ENCODE measurements at regions of chr14 and their contacts with region 1.

Region 1: DNA sequence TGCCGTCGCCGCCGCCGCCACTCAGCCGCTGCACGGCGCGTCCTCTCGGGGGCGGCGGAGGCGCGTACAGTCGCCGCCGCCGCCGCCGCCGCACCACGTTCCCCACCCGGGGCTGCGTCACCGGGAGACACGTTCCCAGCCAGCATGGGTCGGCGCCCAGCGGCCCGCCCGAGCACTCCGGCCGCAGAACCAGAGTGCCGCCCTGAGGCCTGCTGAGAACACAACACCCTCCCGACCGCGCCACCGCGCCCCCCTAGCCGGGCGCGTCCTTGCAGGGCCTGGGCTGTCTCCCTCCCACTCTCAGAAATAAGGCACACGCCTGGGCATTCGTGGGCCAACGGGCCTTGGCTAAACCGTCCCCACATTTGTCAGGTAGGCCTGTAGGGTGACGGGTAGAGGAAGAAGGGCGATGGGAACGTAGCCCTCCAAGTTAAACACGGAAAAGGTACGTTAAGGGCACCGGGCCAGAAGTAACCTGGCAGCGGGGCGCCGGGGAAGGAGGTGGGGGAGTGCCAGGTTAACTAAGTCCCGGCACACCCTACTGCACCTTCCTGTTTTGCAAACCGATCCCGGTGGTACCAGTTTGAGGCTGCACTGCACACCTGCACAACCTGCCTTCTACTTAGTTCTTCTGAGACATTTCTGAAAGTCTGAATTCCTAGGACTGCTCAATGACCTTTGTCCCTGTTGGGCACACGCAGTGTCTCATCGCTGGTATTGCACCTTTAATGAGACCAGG is at the start of gene MAP4K5:
- DNase-seq: peak; percentile 91
- H3K4me3 Mint-ChIP-seq: peak within 1 kb of the TSS; percentile 85
- H3K27ac Mint-ChIP-seq: peak within 1 kb of the TSS; percentile 58
- H3K4me1 Mint-ChIP-seq: peaks cover 42% of the 10 kb centered on the region
- H3K27me3 Mint-ChIP-seq: no peaks in the 10 kb centered on the region
- total RNA-seq, gene MAP4K5: 14.6 to 15.6 TPM

Region 2: GRCh38 chr14:49852301-49853157 is 680.1 kb before region 1 on chr14 and contains the start of gene NEMF:
- CTCF ChIA-PET with region 1: no interaction called
- POLR2A ChIA-PET with region 1: no interaction called
- intact Hi-C with region 1: loop called (anchors 2 kb)
- DNase-seq: peak; percentile 88
- H3K4me3 Mint-ChIP-seq: peak within 1 kb of the TSS; percentile 98
- H3K27ac Mint-ChIP-seq: peak within 1 kb of the TSS; percentile 95
- H3K4me1 Mint-ChIP-seq: peaks cover 39% of the 10 kb centered on the region
- H3K27me3 Mint-ChIP-seq: no peaks in the 10 kb centered on the region
- total RNA-seq, gene NEMF: 63.6 to 71.0 TPM

Region 3: DNA sequence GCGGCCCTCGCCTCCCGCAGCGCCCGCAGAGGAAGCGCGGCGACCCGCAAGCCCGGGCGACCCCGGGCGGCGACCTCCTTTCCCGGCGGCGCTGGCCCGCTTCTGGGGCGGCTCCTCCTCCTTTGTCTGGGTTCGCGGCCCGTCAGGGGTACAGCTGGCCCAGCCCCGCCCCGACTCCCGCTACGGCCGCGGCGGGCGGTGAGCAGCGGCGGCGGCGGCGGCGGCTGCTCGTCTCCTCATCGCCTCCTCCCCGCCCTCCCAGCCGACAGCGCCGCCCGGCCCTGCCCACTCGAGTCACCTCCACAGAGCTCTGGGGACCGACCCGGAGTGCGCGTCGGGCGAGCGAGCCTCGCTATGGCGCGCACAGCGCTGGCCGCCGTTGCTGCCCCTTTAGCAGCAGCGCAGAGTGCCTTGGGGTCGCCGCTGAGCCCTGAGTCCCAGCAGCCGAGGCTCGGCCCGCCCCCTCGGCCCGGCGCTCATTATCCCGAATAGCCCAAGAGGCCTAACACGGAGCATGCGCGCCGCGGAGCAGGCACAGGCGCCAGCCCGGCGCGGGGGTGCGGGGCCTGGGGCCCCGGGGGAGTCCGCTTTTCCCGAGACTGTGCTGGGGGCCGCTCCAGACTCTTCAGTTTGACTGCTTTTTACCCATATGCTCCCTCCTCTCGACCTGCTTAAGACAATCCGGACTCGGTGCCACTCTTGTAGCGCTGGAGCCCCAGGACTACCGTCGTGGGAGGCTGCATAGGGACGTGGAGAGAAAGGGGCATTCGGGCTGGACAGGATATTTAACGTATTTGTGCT is 301.0 kb before region 1 on chr14 and contains the start of gene SOS2:
- CTCF ChIA-PET with region 1: no interaction called
- POLR2A ChIA-PET with region 1: no interaction called
- intact Hi-C with region 1: loop called (anchors 1 kb)
- DNase-seq: peak; percentile 86
- H3K4me3 Mint-ChIP-seq: peak within 1 kb of the TSS; percentile 78
- H3K27ac Mint-ChIP-seq: peak within 1 kb of the TSS; percentile 85
- H3K4me1 Mint-ChIP-seq: peaks cover 40% of the 10 kb centered on the region
- H3K27me3 Mint-ChIP-seq: no peaks in the 10 kb centered on the region
- total RNA-seq, gene SOS2: 19.6 to 20.9 TPM

Region 4: GRCh38 chr14:50363714-50364111 is 169.0 kb before region 1 on chr14:
- CTCF ChIA-PET with region 1: no interaction called
- POLR2A ChIA-PET with region 1: no interaction called
- intact Hi-C with region 1: loop called (anchors 1 kb)
- DNase-seq: peak; percentile 73
- H3K4me3 Mint-ChIP-seq: peak overlapping the region; percentile 72
- H3K27ac Mint-ChIP-seq: peak overlapping the region; percentile 84
- H3K4me1 Mint-ChIP-seq: peaks cover 17% of the 10 kb centered on the region
- H3K27me3 Mint-ChIP-seq: no peaks in the 10 kb centered on the region

Region 5: DNA sequence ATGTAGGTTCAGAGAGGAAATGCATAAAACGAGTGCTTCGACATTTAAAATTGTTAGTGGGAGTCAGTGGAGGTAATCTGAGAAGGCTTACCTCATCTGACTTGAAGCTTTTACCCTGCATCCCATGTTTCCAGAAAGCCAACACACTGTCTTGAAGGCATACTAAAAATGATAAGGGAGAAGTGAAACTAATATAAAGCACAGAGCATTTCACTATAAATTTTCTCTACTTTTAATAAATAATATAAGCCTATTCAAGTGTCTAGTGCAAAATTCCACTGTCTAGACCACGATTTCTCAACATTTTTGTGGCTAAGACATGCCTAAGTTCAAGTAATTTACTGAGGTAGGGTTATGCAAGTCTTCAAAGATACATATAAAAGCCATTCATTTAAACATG is 106.9 kb before region 1 on chr14:
- CTCF ChIA-PET with region 1: no interaction called
- POLR2A ChIA-PET with region 1: no interaction called
- intact Hi-C with region 1: no loop called
- DNase-seq: no peak
- H3K4me3 Mint-ChIP-seq: no peak overlapping the region
- H3K27ac Mint-ChIP-seq: no peak overlapping the region
- H3K4me1 Mint-ChIP-seq: no peaks in the 10 kb centered on the region
- H3K27me3 Mint-ChIP-seq: no peaks in the 10 kb centered on the region

Region 6: DNA sequence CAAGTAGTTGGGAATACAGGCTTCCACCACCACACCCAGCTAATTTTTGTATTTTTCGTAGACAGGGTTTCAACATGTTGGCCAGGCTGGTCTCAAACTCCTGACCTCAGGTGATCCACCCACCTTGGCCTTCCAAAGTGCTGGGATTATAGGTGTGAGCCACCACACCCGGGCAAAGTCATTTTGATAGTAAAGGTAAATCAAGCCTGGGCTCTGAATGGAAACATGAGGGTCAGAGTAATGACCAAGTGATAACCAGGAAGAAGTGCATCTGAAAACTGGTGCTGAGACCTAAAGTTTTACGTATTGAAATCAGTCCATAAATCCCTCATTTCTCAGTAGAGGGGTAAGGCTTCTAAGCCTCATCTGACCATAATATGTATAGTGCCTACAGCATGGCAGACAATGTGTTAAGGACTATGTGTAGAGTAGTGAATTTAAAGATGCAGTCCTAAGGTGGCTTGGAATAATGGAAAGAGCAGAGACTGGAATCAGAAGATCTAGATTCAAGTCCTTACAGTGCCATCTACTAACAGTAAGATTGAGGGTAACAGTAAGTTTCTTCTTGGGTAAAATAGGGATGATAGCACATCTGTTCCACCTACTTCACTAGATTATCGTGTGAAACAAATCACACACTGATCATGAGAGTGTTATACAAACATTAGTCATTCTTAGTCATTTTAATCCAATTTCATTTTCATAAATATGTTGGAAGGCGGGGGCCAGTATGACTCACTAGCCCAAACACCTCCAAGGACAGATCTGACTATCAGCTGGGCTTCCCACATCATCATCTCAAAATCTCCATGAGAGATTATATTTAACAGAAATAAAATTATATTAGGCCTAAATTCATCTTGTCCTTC is 11.5 kb before region 1 on chr14:
- CTCF ChIA-PET with region 1: interaction called, 11 read pairs
- POLR2A ChIA-PET with region 1: interaction called, 7 read pairs
- intact Hi-C with region 1: loop called (anchors 1 kb)
- DNase-seq: peak; percentile 84
- H3K4me3 Mint-ChIP-seq: peak overlapping the region; percentile 25
- H3K27ac Mint-ChIP-seq: peak overlapping the region; percentile 85
- H3K4me1 Mint-ChIP-seq: peaks cover 56% of the 10 kb centered on the region
- H3K27me3 Mint-ChIP-seq: no peaks in the 10 kb centered on the region

Measured in activated CD4-positive, alpha-beta memory T cell treated with anti-CD3 and anti-CD28 coated beads for 36 hours (primary cell).